AG04449 (cell line): ENCODE measurements at regions of chr9 and their contacts with region 1.

Region 1: GRCh38 chr9:79129865-79130480 is 441.8 kb upstream of the TLE4 start:
- DNase-seq: no peak
- H3K4me3 ChIP-seq: no peak overlapping the region
- CTCF ChIP-seq: peak; percentile 81

Region 2: DNA sequence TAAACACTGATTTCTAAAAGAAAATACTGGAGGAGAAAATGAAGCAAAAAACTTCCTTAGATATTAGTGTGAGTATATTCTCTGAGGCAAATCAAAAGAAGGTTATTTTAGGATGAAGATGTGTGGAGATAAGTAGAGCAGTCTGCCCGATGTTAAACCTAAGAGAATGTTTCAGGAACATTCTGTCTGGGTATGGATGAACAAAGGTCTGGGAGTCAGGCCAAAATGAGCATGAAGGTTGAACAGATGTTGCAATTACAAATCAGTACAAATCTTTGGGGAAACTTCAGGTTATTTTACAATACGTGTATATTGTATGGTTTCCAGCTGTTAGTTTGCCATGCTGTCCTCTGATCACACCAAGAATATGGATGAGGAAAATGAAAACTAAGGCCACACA is 908.5 kb before region 1 on chr9:
- CTCF ChIA-PET with region 1: no interaction called
- POLR2A ChIA-PET with region 1: no interaction called
- DNase-seq: no peak
- H3K4me3 ChIP-seq: no peak overlapping the region
- CTCF ChIP-seq: no peak

Region 3: GRCh38 chr9:78311886-78312524 is 818.0 kb before region 1 on chr9:
- CTCF ChIA-PET with region 1: no interaction called
- POLR2A ChIA-PET with region 1: no interaction called
- DNase-seq: no peak
- H3K4me3 ChIP-seq: no peak overlapping the region
- CTCF ChIP-seq: no peak

Region 4: GRCh38 chr9:78601957-78602565 is 527.9 kb before region 1 on chr9:
- CTCF ChIA-PET with region 1: interaction called, 19 read pairs
- POLR2A ChIA-PET with region 1: no interaction called
- DNase-seq: no peak
- H3K4me3 ChIP-seq: no peak overlapping the region
- CTCF ChIP-seq: peak; percentile 72

Region 5: GRCh38 chr9:79116041-79116440 is 13.9 kb before region 1 on chr9:
- CTCF ChIA-PET with region 1: interaction called, 13 read pairs
- POLR2A ChIA-PET with region 1: no interaction called
- DNase-seq: no peak
- H3K4me3 ChIP-seq: no peak overlapping the region
- CTCF ChIP-seq: no peak

Region 6: GRCh38 chr9:79140773-79141172 is 10.8 kb after region 1 on chr9:
- CTCF ChIA-PET with region 1: interaction called, 39 read pairs
- POLR2A ChIA-PET with region 1: no interaction called
- DNase-seq: no peak
- H3K4me3 ChIP-seq: no peak overlapping the region
- CTCF ChIP-seq: no peak

Region 7: GRCh38 chr9:79325501-79325900 is 195.5 kb after region 1 on chr9:
- CTCF ChIA-PET with region 1: no interaction called
- POLR2A ChIA-PET with region 1: no interaction called
- DNase-seq: peak; percentile 29
- H3K4me3 ChIP-seq: no peak overlapping the region
- CTCF ChIP-seq: no peak